ENCODE measurements at regions of chr6 and their contacts with region 1.

Region 1: DNA sequence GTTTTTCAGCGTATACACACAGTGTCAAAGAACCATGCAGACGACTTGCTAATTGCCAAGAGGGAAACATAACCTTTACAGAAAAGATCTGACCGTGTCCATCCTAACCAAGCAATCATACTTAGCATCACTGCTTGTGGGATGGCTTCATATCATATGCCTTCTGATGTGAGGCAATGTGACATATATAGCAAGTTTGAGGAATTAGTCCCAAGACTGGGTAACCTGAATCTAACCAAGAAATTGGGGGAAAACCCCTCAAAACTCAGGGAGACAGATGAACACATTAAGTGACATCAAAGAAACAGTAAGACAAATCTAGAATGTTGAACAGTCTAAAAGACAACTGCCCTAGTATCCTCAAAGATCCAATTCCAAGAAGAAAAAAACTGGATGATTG is 18.4 kb downstream of the GNL1 start:
- DNase-seq: no peak
- H3K4me3 ChIP-seq: no peak overlapping the region
- H3K27ac ChIP-seq: no peak overlapping the region
- H3K4me1 ChIP-seq: no peaks in the 10 kb centered on the region
- H3K27me3 ChIP-seq: no peaks in the 10 kb centered on the region

Region 2: DNA sequence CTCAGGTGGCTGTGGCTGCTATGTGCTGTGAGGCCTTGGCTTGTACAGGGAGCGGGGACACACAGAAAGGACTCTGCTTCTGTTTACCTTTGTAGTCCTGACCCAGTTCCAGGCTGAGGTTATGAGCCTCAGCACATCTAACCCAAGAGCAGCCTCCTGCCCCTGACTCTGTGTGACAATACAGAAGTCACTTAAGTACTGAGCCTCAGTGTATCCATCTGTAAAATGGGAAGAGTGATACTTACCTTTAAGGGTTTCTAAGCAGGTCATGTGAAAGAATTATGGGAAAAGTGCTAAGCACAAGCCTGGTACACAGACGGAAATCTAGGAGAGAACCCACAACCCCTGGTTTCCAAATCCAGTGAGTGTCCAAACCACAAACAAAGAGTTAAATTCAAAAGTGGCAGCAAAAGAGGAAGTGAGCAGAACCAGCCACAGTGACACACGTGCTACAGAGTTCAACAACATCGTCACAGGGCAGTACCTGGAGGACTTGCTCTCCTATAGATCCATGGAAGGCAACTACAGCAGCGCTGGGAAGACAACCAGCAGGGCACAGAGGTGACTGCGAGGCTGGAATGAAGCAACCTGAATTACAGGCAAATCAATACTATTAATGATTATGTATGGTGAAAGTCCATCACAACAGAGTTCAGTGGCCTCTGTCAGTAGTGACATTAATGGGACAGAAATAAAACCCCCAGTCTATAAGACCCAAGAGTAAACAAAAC is 337.2 kb before region 1 on chr6:
- in situ Hi-C with region 1: no loop called
- DNase-seq: no peak
- H3K4me3 ChIP-seq: no peak overlapping the region
- H3K27ac ChIP-seq: no peak overlapping the region
- H3K4me1 ChIP-seq: no peaks in the 10 kb centered on the region
- H3K27me3 ChIP-seq: no peaks in the 10 kb centered on the region

Region 3: GRCh38 chr6:30483677-30484279 is 54.2 kb before region 1 on chr6:
- in situ Hi-C with region 1: loop called (anchors 5 kb)
- DNase-seq: peak; percentile 81
- H3K4me3 ChIP-seq: no peak overlapping the region
- H3K27ac ChIP-seq: no peak overlapping the region
- H3K4me1 ChIP-seq: no peaks in the 10 kb centered on the region
- H3K27me3 ChIP-seq: peaks cover 37% of the 10 kb centered on the region